Uterus (tissue), 4 donors: ENCODE measurements at regions of chr1 and their contacts with region 1.

Region 1: GRCh38 chr1:94237291-94238226 is at the start of gene ARHGAP29:
- DNase-seq: peak; percentile 55 to 58
- H3K4me3 ChIP-seq: peak within 1 kb of the TSS; percentile 27 to 56
- H3K27ac ChIP-seq: peak within 1 kb of the TSS; percentile 67 to 72
- H3K4me1 ChIP-seq: no peaks in the 10 kb centered on the region
- H3K27me3 ChIP-seq: peaks cover 3 to 21% of the 10 kb centered on the region in 2 donors
- CTCF ChIP-seq: no peak
- POLR2A ChIP-seq: peak; percentile 76 to 92
- total RNA-seq, gene ARHGAP29: 20.0 to 67.3 (median 38.8) TPM

Region 2: DNA sequence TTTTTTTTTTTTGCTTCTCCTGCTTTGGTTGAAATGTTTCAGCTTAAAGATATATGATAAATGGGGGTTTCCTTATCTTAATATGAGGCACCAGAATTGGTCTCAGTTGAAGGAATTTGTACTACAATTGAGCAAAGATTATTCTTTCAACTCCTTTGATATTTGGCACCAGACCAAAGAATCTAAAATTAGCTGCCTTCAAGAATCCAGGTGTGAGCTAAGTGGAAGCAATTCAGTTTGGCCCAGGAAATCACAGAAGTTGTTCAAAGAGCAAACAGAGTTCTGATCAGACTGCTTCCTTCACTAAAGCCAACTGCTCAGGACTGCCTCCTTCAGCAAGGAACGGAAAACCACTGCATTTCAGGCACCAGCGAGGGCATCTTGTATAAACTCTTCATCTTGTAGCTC is 487.7 kb before region 1 on chr1:
- intact Hi-C with region 1: no loop called
- DNase-seq: no peak
- H3K4me3 ChIP-seq: no peak overlapping the region
- H3K27ac ChIP-seq: no peak overlapping the region
- H3K4me1 ChIP-seq: no peaks in the 10 kb centered on the region
- H3K27me3 ChIP-seq: no peaks in the 10 kb centered on the region
- CTCF ChIP-seq: no peak
- POLR2A ChIP-seq: no peak

Region 3: DNA sequence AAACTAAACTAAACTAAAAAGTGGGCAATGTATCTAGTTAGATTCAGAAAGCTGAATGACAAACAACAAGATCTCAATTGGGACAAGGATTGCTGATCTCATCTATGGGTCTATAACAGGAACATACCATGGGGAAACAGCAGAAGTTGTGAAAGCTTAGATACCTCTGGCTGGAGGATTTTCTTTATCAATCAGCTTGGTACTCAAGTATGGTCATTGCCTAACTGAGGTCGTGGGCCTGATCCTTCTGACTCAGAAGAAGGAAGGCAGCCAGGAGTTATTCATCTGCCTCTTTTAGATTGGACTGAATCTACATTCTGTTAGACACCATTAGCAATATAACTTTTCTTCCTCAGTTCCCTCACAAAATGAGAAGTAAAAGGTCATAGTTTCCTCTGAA is 398.3 kb before region 1 on chr1:
- intact Hi-C with region 1: no loop called
- DNase-seq: no peak
- H3K4me3 ChIP-seq: no peak overlapping the region
- H3K27ac ChIP-seq: no peak overlapping the region
- H3K4me1 ChIP-seq: peaks cover 0 to under 1% of the 10 kb centered on the region in 2 donors
- H3K27me3 ChIP-seq: no peaks in the 10 kb centered on the region
- CTCF ChIP-seq: no peak
- POLR2A ChIP-seq: no peak

Region 4: GRCh38 chr1:94045465-94046056 is 192.0 kb before region 1 on chr1:
- intact Hi-C with region 1: no loop called
- DNase-seq: peak; percentile 80 to 85
- H3K4me3 ChIP-seq: no peak overlapping the region
- H3K27ac ChIP-seq: peak overlapping the region; percentile 58 to 76
- H3K4me1 ChIP-seq: no peaks in the 10 kb centered on the region
- H3K27me3 ChIP-seq: no peaks in the 10 kb centered on the region
- CTCF ChIP-seq: peak; percentile 74 to 84 (median 78)
- POLR2A ChIP-seq: peak in 1 of 2 donors; percentile 16

Region 5: DNA sequence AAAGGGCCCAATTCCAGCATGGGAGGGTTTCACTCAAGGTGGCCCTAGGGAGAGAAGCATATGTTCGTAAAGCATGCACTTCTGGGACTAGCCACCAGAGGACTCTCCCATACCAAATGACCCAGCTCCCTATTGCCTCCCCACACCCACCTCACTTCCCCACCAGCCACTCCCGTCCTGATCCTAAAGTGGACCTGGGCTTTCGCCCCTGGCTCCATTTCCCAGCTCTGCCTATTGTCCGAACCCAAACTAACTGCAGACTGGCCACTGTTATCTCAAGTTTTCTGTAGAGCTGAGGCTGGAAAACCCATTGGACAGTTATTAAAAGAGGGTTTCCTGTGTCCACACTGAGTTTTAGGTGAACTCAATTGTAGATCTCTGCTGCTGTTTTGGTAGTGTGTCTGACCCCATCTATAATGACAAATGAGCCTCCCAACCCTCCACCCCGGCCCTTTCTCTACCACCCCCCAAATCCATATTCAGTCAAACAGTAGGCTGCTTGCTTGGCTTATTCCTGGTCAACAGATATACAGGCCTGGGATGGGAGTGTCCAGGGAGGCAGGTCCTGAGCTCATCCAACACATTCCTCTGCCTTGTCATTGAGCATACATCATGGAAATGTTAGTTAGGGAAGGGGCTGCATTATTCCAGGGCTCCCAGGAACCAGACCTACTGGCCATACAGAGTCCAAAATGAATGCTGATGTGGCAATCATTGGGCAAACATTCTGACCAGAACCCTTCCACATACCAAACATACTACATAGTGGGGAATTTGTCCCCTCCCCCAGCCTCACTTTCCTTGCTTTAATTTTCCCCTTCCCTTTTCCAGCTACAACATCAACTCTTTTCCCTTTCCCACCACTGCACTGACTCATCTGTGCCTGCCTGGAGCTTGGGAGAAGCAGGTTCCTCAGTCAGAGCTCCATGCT is 175.8 kb before region 1 on chr1:
- intact Hi-C with region 1: loop called (anchors 10 kb)
- DNase-seq: peak; percentile 50 to 65
- H3K4me3 ChIP-seq: no peak overlapping the region
- H3K27ac ChIP-seq: no peak overlapping the region
- H3K4me1 ChIP-seq: no peaks in the 10 kb centered on the region
- H3K27me3 ChIP-seq: no peaks in the 10 kb centered on the region
- CTCF ChIP-seq: peak; percentile 71 to 81 (median 76)
- POLR2A ChIP-seq: no peak